ENCODE measurements at regions of chr9 and their contacts with region 1.

Region 1: GRCh38 chr9:21873540-21874221 is 71.2 kb downstream of the MTAP start:
- DNase-seq: peak; percentile 85
- H3K4me3 ChIP-seq: no peak overlapping the region
- H3K27ac ChIP-seq: peak overlapping the region; percentile 82
- H3K4me1 ChIP-seq: peaks cover 45% of the 10 kb centered on the region
- H3K27me3 ChIP-seq: no peaks in the 10 kb centered on the region
- CTCF ChIP-seq: no peak
- POLR2A ChIP-seq: no peak

Region 2: DNA sequence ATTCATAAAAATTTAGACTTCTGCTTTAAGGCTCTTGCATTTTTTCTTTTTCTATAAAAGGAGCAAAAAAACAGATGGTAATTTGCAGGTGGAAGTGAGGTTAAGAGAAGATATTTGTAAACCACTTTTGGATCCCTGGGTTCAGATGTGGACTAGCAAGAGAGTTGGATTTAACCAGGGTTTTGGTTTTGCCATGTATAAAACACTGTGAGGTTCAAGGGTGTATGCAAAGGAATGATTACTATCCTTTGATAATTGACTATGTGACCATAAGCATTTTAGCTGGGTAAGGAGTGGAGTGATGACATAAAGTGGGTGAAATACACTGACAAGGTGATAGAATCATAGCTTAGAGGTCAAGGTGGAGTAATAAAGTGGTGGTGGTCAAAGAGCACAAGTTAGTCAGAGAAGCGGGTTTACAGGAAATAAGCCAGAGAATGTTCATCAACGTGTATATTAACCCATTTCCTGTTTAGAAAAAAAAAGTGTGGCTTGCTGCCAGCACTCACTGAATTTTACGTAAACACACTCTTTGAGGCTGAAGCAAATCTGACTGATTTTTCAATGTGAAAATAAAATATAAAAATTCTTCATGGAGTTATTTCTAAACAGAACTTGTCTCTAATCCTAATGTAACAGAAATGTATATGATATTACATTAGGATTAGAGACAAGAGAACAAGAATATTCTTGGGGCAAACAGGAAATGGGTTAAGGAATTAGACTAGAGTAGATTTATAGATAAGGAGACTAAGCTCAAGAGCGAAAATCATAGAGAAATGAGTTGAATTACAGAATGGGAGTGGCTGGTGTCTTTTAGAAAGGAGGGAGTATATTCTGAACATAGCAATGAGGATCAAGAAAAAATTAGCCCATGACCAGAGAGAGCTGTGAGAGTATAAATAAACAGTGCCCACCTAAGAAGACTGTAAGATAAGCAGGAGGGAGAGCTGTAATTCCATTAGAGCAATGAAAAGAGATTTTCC is 46.0 kb after region 1 on chr9:
- CTCF ChIA-PET with region 1: interaction called, 5 read pairs
- POLR2A ChIA-PET with region 1: no interaction called
- dilution Hi-C with region 1: no loop called
- intact Hi-C with region 1: loop called (anchors 1 kb)
- DNase-seq: peak; percentile 95
- H3K4me3 ChIP-seq: no peak overlapping the region
- H3K27ac ChIP-seq: peak overlapping the region; percentile 24
- H3K4me1 ChIP-seq: peaks cover 18% of the 10 kb centered on the region
- H3K27me3 ChIP-seq: no peaks in the 10 kb centered on the region
- CTCF ChIP-seq: no peak
- POLR2A ChIP-seq: no peak

Region 3: DNA sequence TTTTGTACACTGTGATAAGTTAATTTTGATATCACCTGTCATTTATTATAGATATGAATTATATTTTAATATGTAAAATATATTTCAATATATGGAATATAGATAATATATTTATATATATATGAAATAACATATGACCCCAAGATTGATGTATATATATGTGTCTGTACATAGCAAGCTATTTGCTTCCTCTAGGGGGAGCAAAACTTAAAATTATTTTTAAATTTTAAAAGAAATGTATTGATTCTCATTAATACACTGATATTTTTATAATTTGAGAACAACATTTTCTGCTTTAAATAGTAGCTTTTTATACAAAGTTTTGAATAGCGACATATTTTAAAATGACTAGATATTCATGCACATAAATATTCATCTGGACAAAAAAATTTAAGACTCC is 845.0 kb after region 1 on chr9:
- CTCF ChIA-PET with region 1: no interaction called
- POLR2A ChIA-PET with region 1: no interaction called
- dilution Hi-C with region 1: no loop called
- intact Hi-C with region 1: no loop called
- DNase-seq: no peak
- H3K4me3 ChIP-seq: no peak overlapping the region
- H3K27ac ChIP-seq: no peak overlapping the region
- H3K4me1 ChIP-seq: no peaks in the 10 kb centered on the region
- H3K27me3 ChIP-seq: no peaks in the 10 kb centered on the region
- CTCF ChIP-seq: no peak
- POLR2A ChIP-seq: no peak